H1 (cell line): ENCODE measurements at regions of chr17 and their contacts with region 1.

Region 1: GRCh38 chr17:7219812-7220581 is at the starts of genes ACADVL and DLG4:
- DNase-seq: peak in 1 of 2 experiments; percentile 90
- H3K4me3 ChIP-seq: peak within 1 kb of the TSS; percentile 76 to 93 (median 86)
- H3K27ac ChIP-seq: peak within 1 kb of the TSS; percentile 49
- H3K4me1 ChIP-seq: peaks cover 6 to 36% (median 20%) of the 10 kb centered on the region in 4 experiments
- H3K27me3 ChIP-seq: no peaks in the 10 kb centered on the region
- CTCF ChIP-seq: no peak
- EP300 ChIP-seq: no peak
- POLR2A ChIP-seq: peak; percentile 79 to 90
- RAD21 ChIP-seq: no peak
- total RNA-seq, gene ACADVL: 169 and 181 TPM in 2 replicates
- total RNA-seq, gene DLG4: 43.1 and 45.9 TPM in 2 replicates

Region 2: GRCh38 chr17:7014261-7014994 is 205.6 kb before region 1 on chr17:
- CTCF ChIA-PET with region 1: no interaction called
- POLR2A ChIA-PET with region 1: no interaction called
- DNase-seq: peak; percentile 81 to 92
- H3K4me3 ChIP-seq: peak overlapping the region; percentile 86 to 100 (median 88)
- H3K27ac ChIP-seq: peak overlapping the region; percentile 59; the same call in 1 of the 2 replicates
- H3K4me1 ChIP-seq: peaks cover 0 to 23% (median 11%) of the 10 kb centered on the region in 4 experiments; a peak in 6 of 7 replicates
- H3K27me3 ChIP-seq: no peaks in the 10 kb centered on the region
- CTCF ChIP-seq: peak; percentile 44 to 66 (median 47); a peak in 3 of 4 replicates
- EP300 ChIP-seq: 0 out of 3 replicates have a peak, but pooled peaks of 1 of the 2 experiments have one; percentile 9
- POLR2A ChIP-seq: peak in 1 of 2 experiments; percentile 55; a peak in 2 of 3 replicates
- RAD21 ChIP-seq: 0 out of 4 replicates have a peak, but pooled peaks of 1 of the 2 experiments have one; percentile 7

Region 3: DNA sequence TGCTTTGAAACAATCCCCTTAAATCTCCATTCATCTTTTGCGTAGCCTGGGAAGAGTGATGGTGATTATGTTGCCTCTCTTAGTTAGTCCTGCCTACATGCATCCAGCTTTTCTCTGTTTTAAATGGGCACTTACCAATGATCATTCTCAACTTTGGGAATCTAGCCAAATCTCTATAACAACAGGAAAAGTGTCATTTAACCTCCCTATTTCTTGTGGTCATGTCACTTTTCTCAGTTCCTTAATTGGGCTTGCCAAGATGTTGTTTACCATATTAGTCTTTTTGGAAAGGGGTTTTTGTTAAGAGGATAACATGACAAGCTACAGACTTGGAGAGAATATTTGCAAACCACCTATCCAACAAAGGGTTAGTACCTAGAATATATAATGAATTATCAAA is 124.4 kb before region 1 on chr17:
- CTCF ChIA-PET with region 1: no interaction called
- POLR2A ChIA-PET with region 1: no interaction called
- DNase-seq: no peak
- H3K4me3 ChIP-seq: no peak overlapping the region
- H3K27ac ChIP-seq: no peak overlapping the region
- H3K4me1 ChIP-seq: no peaks in the 10 kb centered on the region
- H3K27me3 ChIP-seq: no peaks in the 10 kb centered on the region
- CTCF ChIP-seq: no peak
- EP300 ChIP-seq: no peak
- POLR2A ChIP-seq: no peak
- RAD21 ChIP-seq: no peak

Region 4: GRCh38 chr17:7207120-7208001 is 12.6 kb before region 1 on chr17:
- CTCF ChIA-PET with region 1: interaction called, 10 read pairs
- POLR2A ChIA-PET with region 1: interaction called, 18 read pairs
- DNase-seq: no peak
- H3K4me3 ChIP-seq: peak overlapping the region; percentile 36 to 62 (median 42); a peak in 7 of 8 replicates
- H3K27ac ChIP-seq: no peak overlapping the region
- H3K4me1 ChIP-seq: peaks cover 8 to 42% (median 32%) of the 10 kb centered on the region in 4 experiments
- H3K27me3 ChIP-seq: no peaks in the 10 kb centered on the region; a peak in 1 of 7 replicates
- CTCF ChIP-seq: no peak
- EP300 ChIP-seq: no peak
- POLR2A ChIP-seq: no peak
- RAD21 ChIP-seq: no peak

Region 5: DNA sequence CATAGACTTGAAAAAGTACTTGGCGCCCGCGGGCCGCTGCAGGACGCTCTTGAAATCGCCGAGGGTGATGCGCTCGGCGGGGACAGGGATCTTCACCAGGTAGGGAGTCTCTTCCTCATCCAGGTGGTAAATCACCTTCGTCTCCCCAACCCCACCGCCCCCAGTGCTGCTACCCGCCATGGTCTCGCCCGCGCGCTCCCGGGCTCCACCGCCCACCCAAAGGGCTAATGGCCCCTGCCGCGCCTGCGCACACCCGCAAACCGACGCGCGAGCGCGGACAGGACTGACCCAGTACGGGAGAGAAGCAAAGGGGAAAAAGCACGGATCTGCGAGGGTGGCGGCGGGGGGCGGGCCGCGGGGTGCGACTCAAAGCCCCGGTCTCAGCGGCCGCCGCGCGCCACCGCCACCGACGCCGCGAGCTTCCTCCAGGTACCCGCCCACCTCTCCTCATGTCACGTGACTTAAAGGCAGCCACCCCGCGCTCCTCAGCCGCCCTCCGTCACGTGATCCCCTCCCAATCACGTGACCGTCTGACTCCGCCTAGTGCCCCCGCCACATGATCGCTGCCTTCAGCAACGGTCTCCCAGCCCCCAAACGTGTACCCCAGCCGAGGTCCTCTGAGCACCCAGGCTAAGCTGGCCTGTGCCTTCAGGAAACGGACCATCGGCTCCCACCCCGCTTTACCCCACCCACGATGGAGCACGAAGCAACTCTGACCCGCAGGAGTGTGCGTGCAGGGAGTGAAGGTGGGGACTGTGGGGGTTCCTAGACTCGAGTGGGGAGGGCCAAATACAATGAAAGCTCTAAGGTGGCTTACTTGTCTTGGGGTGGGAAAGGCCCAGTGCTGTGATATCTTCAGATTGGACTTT is 14.3 kb after region 1 on chr17 and contains the start of gene DVL2:
- CTCF ChIA-PET with region 1: interaction called, 46 read pairs
- POLR2A ChIA-PET with region 1: interaction called, 386 read pairs
- DNase-seq: peak in 1 of 2 experiments; percentile 95
- H3K4me3 ChIP-seq: peak within 1 kb of the TSS; percentile 68 to 89 (median 80)
- H3K27ac ChIP-seq: peak within 1 kb of the TSS; percentile 71
- H3K4me1 ChIP-seq: peaks cover 3 to 14% (median 6%) of the 10 kb centered on the region in 4 experiments; a peak in 6 of 7 replicates
- H3K27me3 ChIP-seq: no peaks in the 10 kb centered on the region
- CTCF ChIP-seq: no peak
- EP300 ChIP-seq: 0 out of 3 replicates have a peak, but pooled peaks of 1 of the 2 experiments have one; percentile 61
- POLR2A ChIP-seq: peak; percentile 66 to 89
- RAD21 ChIP-seq: no peak; a peak in 1 of 4 replicates
- total RNA-seq, gene DVL2: 59.3 and 59.6 TPM in 2 replicates

Region 6: DNA sequence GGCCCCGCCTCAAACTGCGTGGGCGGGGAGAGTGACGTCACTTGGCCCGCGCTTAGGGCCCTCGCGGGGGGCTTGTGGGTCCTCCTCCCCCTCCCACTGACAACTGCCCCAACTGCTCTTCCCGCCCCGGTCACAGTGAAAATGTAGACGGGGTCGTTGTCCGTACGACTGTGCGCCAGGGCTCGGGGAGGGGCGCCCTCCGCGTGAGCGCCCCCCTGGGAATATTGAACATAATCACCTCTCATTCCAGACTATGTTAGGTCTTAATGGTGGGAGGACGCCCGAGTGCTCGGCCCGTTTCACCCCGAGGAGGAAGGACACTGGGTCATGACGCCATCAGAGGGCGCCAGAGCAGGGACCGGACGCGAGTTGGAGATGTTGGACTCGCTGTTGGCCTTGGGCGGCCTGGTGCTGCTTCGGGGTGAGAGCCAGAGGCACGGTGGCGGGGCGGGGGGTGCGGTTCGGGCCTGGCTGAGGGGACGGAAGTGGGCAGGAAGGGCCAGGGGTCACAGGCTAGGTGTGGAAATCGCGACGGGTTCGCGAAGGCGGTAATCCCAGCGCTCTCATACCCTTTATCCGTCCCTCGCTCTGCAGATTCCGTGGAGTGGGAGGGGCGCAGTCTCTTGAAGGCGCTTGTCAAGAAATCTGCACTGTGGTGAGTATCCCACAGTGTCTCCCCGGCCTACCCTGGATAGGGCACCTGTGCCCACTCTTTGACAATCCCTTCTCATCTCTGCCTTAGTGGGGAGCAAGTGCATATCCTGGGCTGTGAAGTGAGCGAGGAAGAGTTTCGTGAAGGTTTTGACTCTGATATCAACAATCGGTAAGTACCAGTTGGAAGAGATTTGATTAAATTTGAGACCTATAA is 32.4 kb after region 1 on chr17 and contains the start of gene ELP5:
- CTCF ChIA-PET with region 1: interaction called, 4 read pairs
- POLR2A ChIA-PET with region 1: interaction called, 386 read pairs
- DNase-seq: peak in 1 of 2 experiments; percentile 97
- H3K4me3 ChIP-seq: peak within 1 kb of the TSS; percentile 58 to 84 (median 79)
- H3K27ac ChIP-seq: peak within 1 kb of the TSS; percentile 97
- H3K4me1 ChIP-seq: peaks cover 0 to 9% (median 4%) of the 10 kb centered on the region in 4 experiments; a peak in 6 of 7 replicates
- H3K27me3 ChIP-seq: no peaks in the 10 kb centered on the region
- CTCF ChIP-seq: peak in 2 of 3 experiments; percentile 20 to 28; a peak in 2 of 4 replicates
- EP300 ChIP-seq: no peak
- POLR2A ChIP-seq: peak in 1 of 2 experiments; percentile 91; a peak in 2 of 3 replicates
- RAD21 ChIP-seq: peak in 1 of 2 experiments; percentile 11; a peak in 1 of 4 replicates
- total RNA-seq, gene ELP5: 75.4 and 78.1 TPM in 2 replicates

Region 7: GRCh38 chr17:7261172-7261927 is 41.4 kb after region 1 on chr17:
- CTCF ChIA-PET with region 1: interaction called, 3 read pairs
- POLR2A ChIA-PET with region 1: interaction called, 40 read pairs
- DNase-seq: peak in 1 of 2 experiments; percentile 86
- H3K4me3 ChIP-seq: peak overlapping the region; percentile 93 to 98 (median 96)
- H3K27ac ChIP-seq: peak overlapping the region; percentile 91
- H3K4me1 ChIP-seq: peaks cover 4 to 15% (median 6%) of the 10 kb centered on the region in 4 experiments; a peak in 6 of 7 replicates
- H3K27me3 ChIP-seq: no peaks in the 10 kb centered on the region
- CTCF ChIP-seq: no peak
- EP300 ChIP-seq: peak in 1 of 2 experiments; percentile 96; a peak in 2 of 3 replicates
- POLR2A ChIP-seq: peak; percentile 72 to 91
- RAD21 ChIP-seq: no peak

Region 8: DNA sequence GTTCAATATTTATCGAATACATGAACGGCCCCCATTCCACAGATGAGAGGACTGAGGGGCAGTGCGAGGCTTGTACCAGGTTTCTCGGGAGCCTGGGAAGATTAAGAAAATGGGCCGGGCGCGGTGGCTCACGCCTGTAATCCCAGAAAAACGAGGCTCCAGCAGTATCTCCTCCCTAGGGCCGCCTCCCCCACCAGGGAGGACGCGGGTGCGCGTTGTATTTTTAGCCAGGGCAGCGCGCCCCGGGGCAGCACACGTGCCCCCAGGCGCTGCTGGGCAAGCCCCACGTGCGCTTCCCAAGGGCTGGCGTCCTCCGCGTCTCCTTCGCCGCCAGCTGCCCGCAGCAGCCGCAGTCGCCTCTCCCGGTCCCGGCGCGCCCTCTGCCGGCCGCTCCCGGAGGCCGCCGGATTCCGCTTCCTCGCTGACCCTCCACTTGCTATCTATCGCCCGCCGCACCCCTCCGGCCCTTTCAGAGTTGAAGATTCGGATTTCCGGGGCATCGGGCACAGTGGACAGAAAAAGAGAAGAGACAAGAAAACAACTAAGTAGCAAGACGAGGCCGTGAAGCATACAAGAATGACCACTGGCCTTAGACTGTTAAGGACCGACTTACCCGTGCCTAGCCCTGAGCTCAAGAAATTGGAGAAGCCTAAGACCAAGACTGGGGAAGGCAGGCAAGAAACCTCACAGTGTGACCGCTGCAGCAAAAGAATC is 76.3 kb after region 1 on chr17:
- CTCF ChIA-PET with region 1: interaction called, 18 read pairs
- POLR2A ChIA-PET with region 1: interaction called, 5 read pairs
- DNase-seq: peak in 1 of 2 experiments; percentile 96
- H3K4me3 ChIP-seq: peak overlapping the region in 1 of 4 experiments; percentile 51; a peak in 2 of 8 replicates
- H3K27ac ChIP-seq: no peak overlapping the region
- H3K4me1 ChIP-seq: peaks cover 0 to 14% (median 5%) of the 10 kb centered on the region in 4 experiments; a peak in 5 of 7 replicates
- H3K27me3 ChIP-seq: peaks cover 3 to 11% (median 9%) of the 10 kb centered on the region in 4 experiments
- CTCF ChIP-seq: peak; percentile 84 to 96 (median 90)
- EP300 ChIP-seq: peak in 1 of 2 experiments; percentile 83; a peak in 2 of 3 replicates
- POLR2A ChIP-seq: no peak
- RAD21 ChIP-seq: peak; percentile 93 to 95